Head of caudate nucleus (tissue), 42 donors: ENCODE measurements at regions of chr7 and their contacts with region 1.

Region 1: GRCh38 chr7:24819916-24820689 is 62.8 kb upstream of the GSDME start:
- DNase-seq: peak; percentile 50 to 94 (median 80)

Region 2: GRCh38 chr7:24572997-24573625 is 247.0 kb before region 1 on chr7 and contains the start of gene PALS2:
- intact Hi-C with region 1: no loop called
- DNase-seq: peak in 41 of 42 donors; percentile 17 to 85 (median 70)

Region 3: GRCh38 chr7:24800667-24801066 is 19.4 kb before region 1 on chr7:
- intact Hi-C with region 1: no loop called
- DNase-seq: no peak

Region 4: GRCh38 chr7:24948739-24949138 is 128.6 kb after region 1 on chr7:
- intact Hi-C with region 1: no loop called
- DNase-seq: no peak

Region 5: DNA sequence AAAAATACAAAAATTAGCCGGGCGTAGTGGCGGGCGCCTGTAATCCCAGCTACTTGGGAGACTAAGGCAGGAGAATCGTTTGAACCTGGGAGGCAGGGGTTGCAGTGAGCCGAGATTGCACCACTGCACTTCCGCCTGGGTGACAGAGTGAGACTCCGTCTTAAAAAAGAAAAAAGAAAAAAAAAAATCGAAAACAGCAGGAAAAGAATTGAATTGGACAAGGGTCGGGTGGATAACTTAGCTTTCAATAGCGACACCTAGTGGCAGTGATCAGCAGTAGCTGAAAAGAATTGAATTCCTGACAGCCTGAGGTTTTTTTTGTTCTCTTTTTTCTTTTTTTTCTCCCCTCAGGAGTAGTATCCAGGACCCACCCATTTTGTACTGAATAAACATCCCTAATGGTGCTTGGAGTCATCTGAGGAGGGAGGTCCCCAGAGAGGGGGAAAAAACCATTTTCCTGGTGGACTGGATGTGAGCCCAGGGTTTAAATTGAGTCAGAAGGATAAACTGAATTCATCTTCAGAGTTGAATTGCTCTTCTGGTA is 249.9 kb after region 1 on chr7:
- intact Hi-C with region 1: loop called (anchors 5 kb)
- DNase-seq: peak in 34 of 42 donors; percentile 12 to 84 (median 53)